WTC11 (cell line): ENCODE measurements at regions of chr5 and their contacts with region 1.

Region 1: DNA sequence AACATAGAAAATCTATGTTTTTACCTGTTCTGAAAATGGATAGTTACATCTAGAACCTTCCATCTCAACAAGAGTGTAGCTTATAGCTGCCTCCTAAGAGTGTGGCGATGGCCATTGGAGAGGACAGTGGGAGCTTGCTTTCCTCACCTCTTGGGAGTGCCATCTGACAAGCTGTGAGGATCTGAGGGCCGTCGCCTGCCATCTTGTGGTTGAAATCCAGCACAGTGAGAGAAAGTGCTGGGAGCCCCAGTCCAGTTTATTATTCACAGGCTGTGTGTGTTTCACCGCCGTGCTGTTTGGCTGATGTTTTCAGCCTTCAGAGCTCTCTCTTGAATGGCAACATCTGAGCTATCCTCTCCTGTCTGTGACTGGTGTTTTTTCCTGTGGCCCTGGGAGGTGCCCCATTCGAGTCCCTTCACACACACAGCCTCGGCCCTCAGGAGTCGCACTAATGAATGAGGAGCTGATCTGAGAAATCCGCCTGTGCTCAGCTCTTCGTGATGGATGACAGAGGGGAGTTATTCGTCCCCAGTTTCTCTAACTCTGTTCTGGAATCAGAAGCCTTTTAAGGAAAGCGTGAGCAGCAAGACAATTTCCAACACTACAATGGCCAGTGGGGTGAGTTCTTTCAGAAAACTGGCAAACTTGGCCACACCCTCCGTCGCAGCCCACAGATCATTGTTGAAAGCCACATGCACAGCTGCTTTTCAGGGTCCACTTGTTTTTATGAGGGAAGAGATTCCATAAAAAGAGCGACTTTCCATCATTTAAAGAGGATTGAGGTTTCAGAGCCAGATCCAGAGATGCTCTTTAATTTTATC is 170.3 kb downstream of the PDZD2 start:
- DNase-seq: peak; percentile 77
- ATAC-seq: peak; percentile 97
- H3K4me3 Mint-ChIP-seq: no peak overlapping the region
- H3K27ac Mint-ChIP-seq: 0 out of 2 replicates have a peak overlapping the region, but pooled peaks have one; percentile 24
- H3K4me1 Mint-ChIP-seq: peaks cover 6% of the 10 kb centered on the region
- H3K27me3 Mint-ChIP-seq: no peaks in the 10 kb centered on the region
- CTCF ChIP-seq: peak; percentile 38; the same call in 1 of the 2 replicates

Region 2: DNA sequence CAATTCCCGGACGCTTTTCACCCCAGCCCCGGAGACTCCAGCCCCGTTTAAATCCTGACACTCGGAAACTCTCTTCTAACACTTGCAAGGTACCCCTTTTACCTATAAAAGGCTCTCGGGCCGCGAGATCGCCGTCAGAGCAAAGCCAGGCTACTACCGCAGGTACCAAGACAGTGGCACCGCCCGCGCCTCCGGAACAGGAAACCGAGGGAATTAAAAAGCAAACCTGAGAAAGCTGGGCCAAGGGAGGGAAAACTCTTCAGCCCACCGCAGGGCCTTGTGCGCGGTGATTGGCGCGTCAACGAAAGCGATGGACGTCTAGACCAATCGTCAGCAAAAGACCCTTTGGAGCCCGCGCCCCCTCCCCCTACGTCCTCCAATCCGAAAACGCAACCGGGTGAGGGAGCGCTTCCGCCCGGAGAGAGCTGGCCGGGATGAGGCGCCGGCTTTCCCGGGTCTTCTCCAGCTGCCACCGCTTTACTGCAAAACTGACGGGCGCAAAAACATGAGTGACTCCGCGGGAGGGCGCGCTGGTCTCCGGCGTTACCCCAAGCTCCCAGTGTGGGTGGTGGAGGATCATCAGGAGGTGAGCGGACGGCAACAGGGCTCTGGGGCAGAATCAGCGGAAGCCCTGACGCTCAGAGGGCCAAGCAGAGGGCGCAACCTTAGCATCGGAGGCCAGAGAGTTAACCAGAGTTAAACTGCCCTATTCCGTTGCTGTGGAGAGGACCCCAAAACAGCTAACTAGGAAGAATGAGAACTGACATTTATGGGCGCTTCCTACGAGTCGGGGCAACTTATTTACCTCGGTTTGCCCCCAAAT is 277.2 kb before region 1 on chr5 and contains the starts of genes C5orf22 and DROSHA:
- CTCF ChIA-PET with region 1: interaction called, 13 read pairs
- POLR2A ChIA-PET with region 1: no interaction called
- DNase-seq: peak; percentile 96
- ATAC-seq: peak; percentile 98
- H3K4me3 Mint-ChIP-seq: peak within 1 kb of the TSS; percentile 99
- H3K27ac Mint-ChIP-seq: peak within 1 kb of the TSS; percentile 98
- H3K4me1 Mint-ChIP-seq: peaks cover 18% of the 10 kb centered on the region
- H3K27me3 Mint-ChIP-seq: no peaks in the 10 kb centered on the region
- CTCF ChIP-seq: no peak
- total RNA-seq, gene C5orf22: 30.8 to 40.6 TPM (median 36.6 TPM) in 3 replicates
- total RNA-seq, gene DROSHA: 102 to 125 TPM (median 110 TPM) in 3 replicates

Region 3: GRCh38 chr5:31664566-31664965 is 144.7 kb before region 1 on chr5:
- CTCF ChIA-PET with region 1: interaction called, 17 read pairs
- POLR2A ChIA-PET with region 1: no interaction called
- DNase-seq: peak; percentile 65
- ATAC-seq: peak; percentile 97
- H3K4me3 Mint-ChIP-seq: no peak overlapping the region
- H3K27ac Mint-ChIP-seq: no peak overlapping the region
- H3K4me1 Mint-ChIP-seq: peaks cover 19% of the 10 kb centered on the region
- H3K27me3 Mint-ChIP-seq: no peaks in the 10 kb centered on the region
- CTCF ChIP-seq: no peak

Region 4: DNA sequence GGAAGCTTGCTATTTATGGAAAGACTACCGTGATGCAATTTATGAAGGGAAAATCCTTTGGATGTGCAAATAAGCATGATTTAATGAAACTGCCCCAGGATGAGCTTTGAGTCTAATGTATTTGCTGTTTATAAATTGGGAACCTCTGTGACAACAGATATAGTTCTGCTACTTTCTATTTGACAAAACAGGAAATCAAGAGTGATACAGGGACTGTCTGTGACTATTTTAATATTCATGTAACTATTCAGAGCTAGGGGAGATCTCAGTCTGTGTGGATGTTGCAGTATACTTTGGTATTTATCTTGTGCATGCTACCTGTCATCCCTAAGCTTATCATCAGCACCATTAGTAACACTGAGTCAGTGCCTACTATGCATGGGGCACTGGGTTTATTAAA is 38.3 kb before region 1 on chr5:
- CTCF ChIA-PET with region 1: interaction called, 27 read pairs
- POLR2A ChIA-PET with region 1: no interaction called
- DNase-seq: no peak
- ATAC-seq: no peak
- H3K4me3 Mint-ChIP-seq: no peak overlapping the region
- H3K27ac Mint-ChIP-seq: no peak overlapping the region
- H3K4me1 Mint-ChIP-seq: peaks cover 31% of the 10 kb centered on the region
- H3K27me3 Mint-ChIP-seq: no peaks in the 10 kb centered on the region; the same call in 1 of the 2 replicates
- CTCF ChIP-seq: no peak

Region 5: DNA sequence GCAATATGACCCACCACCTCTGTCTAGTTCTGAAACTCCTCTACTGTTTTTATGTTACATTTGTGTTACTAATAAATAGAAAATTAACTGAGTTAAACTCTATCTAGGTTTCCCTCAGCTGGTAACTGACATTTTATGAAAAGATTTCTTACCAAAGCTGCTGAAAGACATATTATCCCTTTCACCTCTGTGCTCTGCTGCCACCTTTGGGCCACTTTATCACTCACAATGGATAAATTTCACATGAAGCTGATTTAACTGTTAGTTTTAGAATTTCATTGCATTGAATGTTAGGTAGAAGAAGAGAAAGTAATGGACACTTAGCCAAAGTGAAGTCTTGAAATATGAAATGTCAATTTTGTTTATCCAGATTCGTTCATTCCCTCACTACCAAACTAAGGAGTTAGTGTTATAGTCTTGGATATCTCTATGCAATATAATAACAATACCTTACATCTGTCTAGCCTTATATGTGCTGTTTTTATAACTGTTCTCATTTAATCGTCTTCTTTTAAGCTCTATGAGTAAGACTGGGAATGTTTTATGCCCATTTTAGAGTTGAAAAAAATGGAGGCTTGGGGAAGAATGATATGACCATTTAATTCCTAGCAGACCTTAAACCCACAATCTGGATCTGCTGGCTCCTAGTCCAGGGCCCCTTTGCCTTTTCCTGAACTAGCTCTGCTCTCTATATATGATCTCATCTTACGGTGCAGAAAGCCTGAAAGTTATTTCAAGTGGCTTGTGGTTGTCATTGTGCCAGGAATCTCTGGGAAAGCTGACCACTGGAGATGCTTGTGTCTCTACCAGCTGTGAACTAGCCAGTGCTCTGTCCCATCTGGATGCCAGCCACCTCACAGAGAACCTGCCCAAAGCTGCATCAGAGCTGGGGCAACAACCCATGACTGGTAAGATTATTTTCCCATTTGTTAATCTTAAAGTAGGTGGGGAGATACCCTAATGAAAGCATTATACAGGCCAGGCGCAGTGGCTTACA is 267.7 kb after region 1 on chr5:
- CTCF ChIA-PET with region 1: interaction called, 13 read pairs
- POLR2A ChIA-PET with region 1: no interaction called
- DNase-seq: peak; percentile 40
- ATAC-seq: no peak; the same call in 1 of the 2 replicates
- H3K4me3 Mint-ChIP-seq: no peak overlapping the region
- H3K27ac Mint-ChIP-seq: no peak overlapping the region
- H3K4me1 Mint-ChIP-seq: no peaks in the 10 kb centered on the region
- H3K27me3 Mint-ChIP-seq: no peaks in the 10 kb centered on the region
- CTCF ChIP-seq: peak; percentile 58